Heart left ventricle (tissue), 16 donors: ENCODE measurements at regions of chr6 and their contacts with region 1.

Region 1: GRCh38 chr6:138588805-138589434 is 89.6 kb upstream of the NHSL1 start:
- DNase-seq: peak in 4 of 5 donors; percentile 46 to 60 (median 59)
- ATAC-seq: peak in 3 of 4 donors; percentile 32 to 58 (median 49)
- H3K4me3 ChIP-seq: no peak overlapping the region
- H3K27ac ChIP-seq: no peak overlapping the region
- H3K4me1 ChIP-seq: peaks cover 0 to 27% (median 10%) of the 10 kb centered on the region in 12 donors
- H3K27me3 ChIP-seq: no peaks in the 10 kb centered on the region
- CTCF ChIP-seq: peak; percentile 79 to 96 (median 92)
- POLR2A ChIP-seq: no peak

Region 2: GRCh38 chr6:138001750-138002349 is 587.1 kb before region 1 on chr6:
- intact Hi-C with region 1: loop called in 1 of 10 experiments (anchors 10 kb)
- DNase-seq: peak in 4 of 5 donors; percentile 34 to 57 (median 35)
- ATAC-seq: peak in 1 of 4 donors; percentile 51
- H3K4me3 ChIP-seq: no peak overlapping the region
- H3K27ac ChIP-seq: no peak overlapping the region
- H3K4me1 ChIP-seq: no peaks in the 10 kb centered on the region
- H3K27me3 ChIP-seq: no peaks in the 10 kb centered on the region
- CTCF ChIP-seq: peak; percentile 73 to 90 (median 86)
- POLR2A ChIP-seq: no peak

Region 3: DNA sequence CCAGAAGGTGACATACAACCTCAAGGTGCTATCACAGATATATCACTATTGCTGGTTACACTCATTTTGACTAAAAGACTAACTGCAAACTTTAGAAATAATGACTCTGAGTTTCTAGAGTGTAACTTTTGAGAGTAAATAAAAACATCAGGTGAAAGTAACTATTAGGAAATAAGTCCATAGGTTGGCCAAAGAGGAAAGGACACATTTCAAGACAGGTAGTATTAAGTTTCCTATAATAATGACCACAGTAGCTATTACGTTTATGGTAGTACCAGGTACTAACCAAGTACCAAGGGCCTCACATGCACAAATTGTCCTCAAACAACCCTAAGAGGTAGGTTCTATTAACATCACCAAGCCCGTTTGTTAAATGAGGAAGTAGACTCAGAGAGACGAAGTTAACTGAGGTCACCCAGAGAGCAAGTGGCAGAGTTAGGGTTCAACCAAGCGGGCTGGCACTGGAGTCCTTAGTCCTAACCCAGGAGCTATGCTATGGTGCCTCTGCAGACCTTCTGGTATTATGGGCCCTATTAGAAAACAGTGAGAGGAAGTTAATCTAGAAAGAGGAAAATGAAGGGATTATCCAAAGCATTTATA is 148.1 kb before region 1 on chr6:
- intact Hi-C with region 1: no loop called
- DNase-seq: no peak
- ATAC-seq: peak in 2 of 4 donors; percentile 31 to 44
- H3K4me3 ChIP-seq: no peak overlapping the region
- H3K27ac ChIP-seq: peak overlapping the region in 4 of 12 donors; percentile 27 to 71 (median 57)
- H3K4me1 ChIP-seq: peaks cover 0 to 38% (median 6%) of the 10 kb centered on the region in 12 donors
- H3K27me3 ChIP-seq: no peaks in the 10 kb centered on the region
- CTCF ChIP-seq: no peak
- POLR2A ChIP-seq: no peak

Region 4: DNA sequence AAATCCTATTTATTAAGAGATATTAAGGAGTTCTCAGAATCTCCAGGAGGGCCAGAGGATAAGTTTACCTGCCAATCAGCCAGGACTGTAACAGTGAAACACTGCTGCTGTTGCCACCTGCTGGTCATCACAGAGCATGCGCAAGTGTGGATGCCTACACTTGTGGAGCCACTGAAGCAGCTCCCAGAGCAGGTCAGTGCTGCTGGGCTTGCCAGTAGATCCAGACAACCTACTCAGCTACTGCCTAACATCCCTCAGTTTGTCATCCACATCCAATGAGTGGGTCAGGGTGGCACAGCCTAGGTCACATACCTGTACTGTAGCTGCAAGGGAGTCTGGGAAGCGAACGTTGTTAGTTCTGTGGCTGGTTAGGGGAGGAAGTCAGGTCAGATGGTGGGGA is 71.3 kb before region 1 on chr6:
- intact Hi-C with region 1: loop called in 1 of 10 experiments (anchors 5 kb)
- DNase-seq: peak in 2 of 5 donors; percentile 19 to 26
- ATAC-seq: peak in 3 of 4 donors; percentile 37 to 67 (median 51)
- H3K4me3 ChIP-seq: no peak overlapping the region
- H3K27ac ChIP-seq: no peak overlapping the region
- H3K4me1 ChIP-seq: peaks cover 0 to 44% (median 16%) of the 10 kb centered on the region in 12 donors
- H3K27me3 ChIP-seq: no peaks in the 10 kb centered on the region
- CTCF ChIP-seq: peak; percentile 25 to 64 (median 50)
- POLR2A ChIP-seq: no peak

Region 5: GRCh38 chr6:138692058-138692977 is 103.4 kb after region 1 on chr6:
- intact Hi-C with region 1: loop called in 7 of 10 experiments (anchors 2 to 5 kb)
- DNase-seq: peak; percentile 72 to 91 (median 82)
- ATAC-seq: peak; percentile 61 to 90 (median 82)
- H3K4me3 ChIP-seq: peak overlapping the region; percentile 36 to 91 (median 72)
- H3K27ac ChIP-seq: peak overlapping the region; percentile 50 to 82 (median 68)
- H3K4me1 ChIP-seq: peaks cover 0 to 19% (median 4%) of the 10 kb centered on the region in 12 donors
- H3K27me3 ChIP-seq: no peaks in the 10 kb centered on the region
- CTCF ChIP-seq: peak; percentile 72 to 97 (median 88)
- POLR2A ChIP-seq: no peak